Activated CD4-positive, alpha-beta memory T cell treated with anti-CD3 and anti-CD28 coated beads for 36 hours (primary cell): ENCODE measurements at regions of chr2 and their contacts with region 1.

Region 1: DNA sequence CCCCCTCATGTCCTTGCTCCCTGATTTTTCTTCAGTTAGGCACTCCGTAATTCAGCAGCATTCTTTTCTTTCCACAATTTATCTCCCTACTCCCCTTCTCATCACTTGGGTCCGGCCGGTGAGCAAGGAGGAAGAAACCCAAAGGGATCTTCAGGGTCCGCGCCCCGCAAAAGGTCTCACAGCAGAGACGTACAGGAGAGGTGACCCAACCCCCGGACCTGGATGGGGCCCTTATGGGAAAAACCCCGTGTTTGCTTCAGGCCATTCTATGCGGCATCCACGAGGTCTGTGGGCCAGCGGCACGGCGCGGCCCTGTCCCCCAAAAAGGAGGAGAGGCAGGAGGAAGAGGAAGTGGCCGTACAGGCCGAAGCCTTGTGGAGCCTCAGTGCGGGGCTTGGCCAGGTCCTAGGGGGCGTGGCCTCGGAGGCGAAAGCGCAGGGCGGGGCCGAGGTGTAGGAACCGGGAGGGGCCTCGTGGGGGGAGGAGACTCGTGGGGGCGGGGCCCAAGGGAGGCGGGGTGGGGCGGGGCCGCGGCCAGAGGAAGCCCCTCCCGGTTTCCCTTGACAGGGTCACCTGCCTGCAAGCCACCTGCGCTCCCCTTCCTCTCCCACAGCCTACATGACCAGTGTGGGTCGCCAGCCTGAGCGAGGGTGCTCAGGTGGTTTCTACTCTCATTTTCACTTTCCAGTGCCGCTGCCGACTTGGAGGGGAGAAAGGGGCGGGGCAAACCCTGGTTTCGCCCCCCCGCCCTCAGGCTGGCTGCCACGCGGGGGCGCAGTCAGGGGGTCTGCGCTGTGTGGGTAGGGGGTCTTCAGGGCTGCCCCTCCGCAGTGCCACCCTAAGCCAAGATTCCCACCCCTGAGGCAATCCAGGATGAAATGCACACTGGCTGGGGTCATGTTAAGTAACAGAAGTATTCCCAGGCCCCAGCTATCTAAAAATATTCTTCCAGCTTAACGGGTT is 156.4 kb upstream of the XPO1 start:
- DNase-seq: peak; percentile 90
- H3K4me3 Mint-ChIP-seq: peak overlapping the region; percentile 79
- H3K27ac Mint-ChIP-seq: peak overlapping the region; percentile 64
- H3K4me1 Mint-ChIP-seq: peaks cover 11% of the 10 kb centered on the region
- H3K27me3 Mint-ChIP-seq: no peaks in the 10 kb centered on the region

Region 2: DNA sequence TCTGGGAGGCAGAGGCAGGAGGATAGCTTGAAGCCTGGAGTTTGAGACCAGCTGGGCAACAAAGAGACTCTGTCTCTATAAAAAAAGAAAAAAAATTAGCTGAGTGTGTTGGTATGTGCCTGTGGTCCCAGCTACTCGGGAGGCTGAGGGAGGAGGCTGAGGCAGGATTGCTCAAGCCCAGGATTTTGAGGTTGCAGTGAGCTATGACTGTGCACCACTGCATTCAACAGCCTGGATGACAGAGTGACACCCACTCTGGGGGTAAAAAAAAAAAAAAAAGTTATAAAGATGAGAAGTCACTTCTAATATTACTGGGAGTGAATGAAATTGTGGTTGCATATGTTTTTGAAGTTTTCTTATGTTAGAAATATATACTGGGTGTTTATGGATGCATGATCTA is 461.0 kb before region 1 on chr2:
- CTCF ChIA-PET with region 1: no interaction called
- POLR2A ChIA-PET with region 1: no interaction called
- intact Hi-C with region 1: no loop called
- DNase-seq: peak; percentile 59
- H3K4me3 Mint-ChIP-seq: no peak overlapping the region
- H3K27ac Mint-ChIP-seq: no peak overlapping the region
- H3K4me1 Mint-ChIP-seq: peaks cover 9% of the 10 kb centered on the region
- H3K27me3 Mint-ChIP-seq: no peaks in the 10 kb centered on the region

Region 3: DNA sequence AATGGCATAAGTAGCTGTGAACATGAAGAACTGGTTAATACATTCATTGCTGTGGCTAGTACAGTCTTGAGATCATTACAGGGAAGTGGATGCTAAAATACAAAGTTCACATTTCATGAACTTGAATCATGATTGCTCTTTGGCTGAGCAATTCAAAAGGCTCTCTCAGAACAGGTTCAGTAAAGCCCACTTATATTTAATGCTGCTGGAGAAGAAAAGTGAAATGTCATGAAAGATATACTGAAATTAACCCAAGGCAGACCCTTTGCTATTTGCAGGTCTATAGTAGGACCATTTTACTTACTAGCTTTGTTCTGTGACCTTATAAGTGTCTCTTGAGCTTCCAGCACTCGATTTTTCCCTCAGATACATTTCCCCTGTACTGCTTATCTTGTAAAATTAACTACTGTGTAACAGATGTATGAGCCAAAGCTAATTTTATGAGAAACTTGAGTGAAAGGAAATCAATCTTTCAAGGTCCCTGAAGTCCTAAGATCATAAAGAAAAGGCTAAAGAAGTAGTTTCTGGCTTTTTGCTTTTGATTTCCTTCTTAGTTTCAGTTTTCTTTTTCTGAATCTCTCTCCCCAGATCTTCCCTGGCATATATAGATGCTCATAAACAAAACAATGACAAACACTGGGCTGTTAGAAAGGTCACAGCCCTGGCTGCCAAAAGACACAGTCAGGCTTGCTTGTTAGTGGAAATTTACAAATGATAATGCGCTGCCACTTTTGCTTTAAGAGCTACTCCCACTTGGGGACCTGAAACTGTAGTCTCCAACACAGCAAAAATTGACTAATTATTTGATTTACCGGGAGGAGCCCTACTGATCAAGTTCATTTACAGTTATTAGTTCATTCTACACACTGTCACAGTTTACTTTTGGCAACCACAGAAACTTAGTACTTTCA is 23.7 kb before region 1 on chr2:
- CTCF ChIA-PET with region 1: no interaction called
- POLR2A ChIA-PET with region 1: interaction called, 8 read pairs
- intact Hi-C with region 1: loop called (anchors 1 kb)
- DNase-seq: peak; percentile 46
- H3K4me3 Mint-ChIP-seq: peak overlapping the region; percentile 52
- H3K27ac Mint-ChIP-seq: peak overlapping the region; percentile 66
- H3K4me1 Mint-ChIP-seq: peaks cover 19% of the 10 kb centered on the region
- H3K27me3 Mint-ChIP-seq: no peaks in the 10 kb centered on the region

Region 4: GRCh38 chr2:61707969-61708852 is 13.6 kb after region 1 on chr2:
- CTCF ChIA-PET with region 1: no interaction called
- POLR2A ChIA-PET with region 1: no interaction called
- intact Hi-C with region 1: loop called (anchors 2 kb)
- DNase-seq: peak; percentile 56
- H3K4me3 Mint-ChIP-seq: no peak overlapping the region
- H3K27ac Mint-ChIP-seq: no peak overlapping the region
- H3K4me1 Mint-ChIP-seq: peaks cover 5% of the 10 kb centered on the region
- H3K27me3 Mint-ChIP-seq: no peaks in the 10 kb centered on the region

Region 5: DNA sequence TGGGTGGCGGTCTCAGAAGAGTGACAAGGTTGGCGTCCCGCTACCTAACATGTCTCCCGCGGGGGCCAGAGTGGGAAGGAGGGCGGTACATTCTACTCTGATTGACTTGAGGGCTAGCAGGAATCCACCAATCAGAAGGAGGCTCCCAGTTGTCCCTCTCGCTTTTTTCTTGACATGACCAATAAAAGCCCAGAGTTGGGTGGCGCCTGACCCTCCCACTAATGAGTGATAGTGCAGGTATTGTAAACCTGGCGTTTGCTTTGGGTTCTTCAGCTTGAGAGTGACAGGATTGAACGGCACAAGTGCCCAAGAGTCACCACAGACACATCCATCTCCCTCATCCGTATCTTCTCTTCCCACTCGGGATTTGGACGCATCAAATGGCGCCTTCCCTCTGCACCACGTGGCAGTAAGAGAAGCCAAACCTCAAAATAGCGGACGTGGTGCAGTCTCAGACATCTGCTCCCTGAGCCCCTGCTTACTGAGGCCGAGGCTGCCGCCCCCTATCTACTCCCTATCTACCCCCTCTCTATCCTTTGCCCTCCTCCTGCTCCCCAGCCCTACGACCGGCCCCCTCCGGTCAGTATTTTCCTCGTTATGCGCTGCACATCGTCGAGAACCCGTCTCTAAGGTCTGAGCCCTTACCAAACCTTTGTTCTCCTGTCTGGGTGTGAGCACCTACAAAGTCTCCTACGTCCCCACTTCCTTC is 160.0 kb after region 1 on chr2:
- CTCF ChIA-PET with region 1: no interaction called
- POLR2A ChIA-PET with region 1: no interaction called
- intact Hi-C with region 1: loop called (anchors 10 kb)
- DNase-seq: peak; percentile 93
- H3K4me3 Mint-ChIP-seq: peak overlapping the region; percentile 91
- H3K27ac Mint-ChIP-seq: peak overlapping the region; percentile 90
- H3K4me1 Mint-ChIP-seq: peaks cover 19% of the 10 kb centered on the region
- H3K27me3 Mint-ChIP-seq: no peaks in the 10 kb centered on the region

Region 6: GRCh38 chr2:61888267-61889055 is 193.9 kb after region 1 on chr2 and contains the start of gene CCT4:
- CTCF ChIA-PET with region 1: no interaction called
- POLR2A ChIA-PET with region 1: no interaction called
- intact Hi-C with region 1: loop called (anchors 10 kb)
- DNase-seq: peak; percentile 92
- H3K4me3 Mint-ChIP-seq: peak within 1 kb of the TSS; percentile 99
- H3K27ac Mint-ChIP-seq: peak within 1 kb of the TSS; percentile 99
- H3K4me1 Mint-ChIP-seq: peaks cover 26% of the 10 kb centered on the region
- H3K27me3 Mint-ChIP-seq: no peaks in the 10 kb centered on the region
- total RNA-seq, gene CCT4: 345 to 352 TPM